Head of caudate nucleus (tissue), 42 donors: ENCODE measurements at regions of chr1 and their contacts with region 1.

Region 1: DNA sequence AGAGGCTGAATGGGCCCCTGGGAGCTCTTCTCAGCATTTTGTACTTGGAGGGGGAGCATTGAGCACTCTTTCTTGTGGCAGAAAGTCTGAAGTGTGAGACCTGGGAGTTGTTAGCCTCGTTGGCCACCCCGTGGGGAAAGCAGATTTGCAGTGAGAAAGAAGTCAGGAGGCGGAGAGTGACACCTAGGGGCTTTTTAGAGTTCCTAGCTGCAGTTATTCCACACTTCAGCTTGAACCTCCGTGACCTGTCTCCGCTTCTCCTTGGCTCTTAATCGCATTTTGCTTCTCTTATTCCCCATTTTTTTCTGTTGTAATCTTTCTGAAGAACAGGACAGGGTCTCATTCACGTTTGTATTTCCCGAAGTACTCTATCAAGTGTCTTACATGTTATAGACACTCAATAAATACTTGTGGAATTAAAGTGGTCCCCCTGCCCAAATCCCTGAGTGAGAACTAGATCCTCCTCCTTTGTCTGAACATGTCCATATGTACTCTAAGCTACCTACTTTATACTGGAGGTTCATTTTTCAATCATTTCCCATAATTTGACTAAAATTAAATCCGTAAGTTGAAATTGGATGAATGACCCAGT is 14.5 kb upstream of the C1orf141 start:
- DNase-seq: peak in 41 of 42 donors; percentile 26 to 87 (median 68)

Region 2: GRCh38 chr1:66764994-66765578 is 384.2 kb before region 1 on chr1:
- intact Hi-C with region 1: loop called (anchors 5 kb)
- DNase-seq: peak in 29 of 42 donors; percentile 7 to 85 (median 46)

Region 3: GRCh38 chr1:66996018-66996682 is 153.1 kb before region 1 on chr1:
- intact Hi-C with region 1: loop called (anchors 5 kb)
- DNase-seq: peak in 39 of 42 donors; percentile 35 to 86 (median 69)

Region 4: GRCh38 chr1:67019600-67020136 is 129.6 kb before region 1 on chr1:
- intact Hi-C with region 1: no loop called
- DNase-seq: peak in 4 of 42 donors; percentile 4 to 37 (median 17)